Posterior vena cava (tissue), 2 donors: ENCODE measurements at regions of chr1 and their contacts with region 1.

Region 1: GRCh38 chr1:234722904-234723720 is 113.1 kb upstream of the IRF2BP2 start:
- DNase-seq: peak; percentile 91

Region 2: GRCh38 chr1:234533975-234534876 is 188.9 kb before region 1 on chr1:
- intact Hi-C with region 1: loop called in 1 of 2 experiments (anchors 10 kb)
- DNase-seq: peak; percentile 98

Region 3: DNA sequence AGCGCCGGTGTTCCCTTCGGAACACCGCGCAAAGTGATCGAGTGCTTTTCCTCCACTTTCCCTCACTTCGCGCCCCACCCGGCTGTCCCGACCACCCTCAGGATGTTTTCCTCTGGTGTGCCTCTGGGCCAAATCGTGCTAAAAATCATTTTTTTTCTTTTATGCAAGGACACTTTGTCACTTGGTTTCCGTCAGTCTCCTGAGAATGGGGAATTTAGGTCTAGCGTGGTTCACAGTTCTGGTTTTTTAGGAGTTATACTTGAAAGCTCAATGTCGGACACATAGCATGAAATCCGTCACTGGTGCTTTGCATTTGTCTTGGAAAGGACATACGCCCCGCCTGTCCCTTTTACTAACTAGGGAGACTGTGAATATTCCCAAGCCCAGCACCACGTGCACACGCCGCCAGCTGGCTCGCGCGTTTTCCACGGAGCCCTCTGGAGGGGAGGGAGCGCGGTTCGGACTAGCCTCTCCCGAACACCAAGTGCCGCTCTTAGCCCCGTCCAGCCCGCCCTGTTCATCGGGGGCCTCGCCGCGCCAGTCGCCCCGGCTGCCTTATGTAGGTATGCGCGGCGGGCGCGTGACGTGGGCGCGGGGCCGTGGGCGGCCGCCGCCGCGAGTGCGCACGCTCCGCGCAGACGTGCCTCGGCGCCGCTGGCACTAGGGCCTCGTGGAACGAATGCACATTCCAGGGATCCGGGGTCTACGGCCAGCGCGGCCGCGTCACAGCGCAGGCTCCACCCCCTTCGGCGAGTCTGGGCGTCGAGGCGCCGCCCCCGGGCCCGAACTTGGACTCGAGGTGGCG is 112.6 kb before region 1 on chr1:
- intact Hi-C with region 1: loop called (anchors 5 kb)
- DNase-seq: peak; percentile 99

Region 4: DNA sequence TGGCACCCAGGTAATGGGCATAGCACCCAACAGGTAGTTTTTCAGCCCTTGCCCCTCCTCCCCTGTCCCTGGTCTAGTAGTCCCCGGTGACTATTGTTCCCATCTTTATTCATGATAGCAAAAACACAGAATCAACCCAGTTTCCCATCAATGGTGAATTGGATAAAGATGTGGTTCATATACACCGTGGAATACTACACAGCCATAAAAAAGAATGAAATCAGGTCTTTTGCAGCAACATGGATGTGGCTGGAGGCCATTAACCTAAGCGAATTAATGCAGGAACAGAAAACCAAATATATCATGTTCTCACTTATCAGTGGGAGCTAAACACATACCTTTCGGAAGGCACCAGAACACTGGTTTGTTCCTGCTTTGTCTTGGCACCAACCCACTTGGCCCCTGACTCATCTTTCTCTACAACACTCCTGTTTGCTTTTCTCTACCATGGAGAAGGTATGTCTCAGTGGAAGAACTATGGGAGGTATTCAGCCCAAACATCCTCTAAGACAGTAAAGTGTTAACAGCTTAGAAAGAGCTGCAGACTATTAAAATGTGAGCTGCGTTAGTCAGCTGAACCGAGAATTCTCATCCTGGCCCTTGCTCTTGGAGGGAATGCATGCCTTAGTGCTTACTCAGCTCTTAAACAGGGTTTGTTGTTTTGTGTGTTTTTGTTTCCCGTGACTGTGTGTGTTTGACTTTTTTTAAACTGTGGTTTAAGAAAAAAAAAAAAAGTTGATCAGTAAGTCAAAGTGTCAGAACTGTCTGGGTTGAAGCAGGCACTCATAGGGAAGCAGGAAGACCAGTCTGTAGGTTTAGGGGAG is 202.5 kb after region 1 on chr1:
- intact Hi-C with region 1: loop called in 1 of 2 experiments (anchors 10 kb)
- DNase-seq: no peak

Region 5: GRCh38 chr1:234978397-234979295 is 255.5 kb after region 1 on chr1:
- intact Hi-C with region 1: loop called in 1 of 2 experiments (anchors 5 kb)
- DNase-seq: peak; percentile 86

Region 6: GRCh38 chr1:235075188-235075926 is 352.2 kb after region 1 on chr1:
- intact Hi-C with region 1: loop called (anchors 10 kb)
- DNase-seq: peak; percentile 84